BJ (cell line): ENCODE measurements at regions of chr2 and their contacts with region 1.

Region 1: GRCh38 chr2:204505946-204506345 is 39.3 kb upstream of the PARD3B start:
- DNase-seq: peak; percentile 73
- H3K4me3 ChIP-seq: no peak overlapping the region
- H3K27me3 ChIP-seq: no peaks in the 10 kb centered on the region
- CTCF ChIP-seq: no peak

Region 2: GRCh38 chr2:204483608-204484081 is 22.3 kb before region 1 on chr2:
- CTCF ChIA-PET with region 1: no interaction called
- POLR2A ChIA-PET with region 1: no interaction called
- DNase-seq: no peak
- H3K4me3 ChIP-seq: no peak overlapping the region
- H3K27me3 ChIP-seq: no peaks in the 10 kb centered on the region
- CTCF ChIP-seq: no peak

Region 3: DNA sequence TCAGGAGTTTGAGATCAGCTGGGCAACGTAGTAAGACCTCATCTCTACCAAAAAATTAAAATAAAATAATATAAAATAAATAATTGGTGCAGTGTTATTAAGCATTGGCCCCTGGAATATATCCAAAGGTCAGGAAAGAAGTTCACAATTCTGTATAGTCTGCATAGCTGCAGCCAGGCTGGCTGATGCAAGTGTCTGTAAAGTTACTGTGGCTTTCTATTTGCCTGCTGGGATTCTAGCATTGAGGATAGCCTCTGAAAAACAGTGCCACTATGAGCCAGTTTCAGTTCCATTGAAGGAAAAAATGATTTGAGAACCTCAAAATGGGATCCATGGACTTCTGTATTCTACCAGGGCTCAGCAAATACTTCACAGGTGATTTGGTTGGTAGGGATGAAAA is 247.9 kb after region 1 on chr2:
- CTCF ChIA-PET with region 1: no interaction called
- POLR2A ChIA-PET with region 1: interaction called, 13 read pairs
- DNase-seq: no peak
- H3K4me3 ChIP-seq: no peak overlapping the region
- H3K27me3 ChIP-seq: no peaks in the 10 kb centered on the region
- CTCF ChIP-seq: no peak